ENCODE measurements at regions of chr6 and their contacts with region 1.

Region 1: DNA sequence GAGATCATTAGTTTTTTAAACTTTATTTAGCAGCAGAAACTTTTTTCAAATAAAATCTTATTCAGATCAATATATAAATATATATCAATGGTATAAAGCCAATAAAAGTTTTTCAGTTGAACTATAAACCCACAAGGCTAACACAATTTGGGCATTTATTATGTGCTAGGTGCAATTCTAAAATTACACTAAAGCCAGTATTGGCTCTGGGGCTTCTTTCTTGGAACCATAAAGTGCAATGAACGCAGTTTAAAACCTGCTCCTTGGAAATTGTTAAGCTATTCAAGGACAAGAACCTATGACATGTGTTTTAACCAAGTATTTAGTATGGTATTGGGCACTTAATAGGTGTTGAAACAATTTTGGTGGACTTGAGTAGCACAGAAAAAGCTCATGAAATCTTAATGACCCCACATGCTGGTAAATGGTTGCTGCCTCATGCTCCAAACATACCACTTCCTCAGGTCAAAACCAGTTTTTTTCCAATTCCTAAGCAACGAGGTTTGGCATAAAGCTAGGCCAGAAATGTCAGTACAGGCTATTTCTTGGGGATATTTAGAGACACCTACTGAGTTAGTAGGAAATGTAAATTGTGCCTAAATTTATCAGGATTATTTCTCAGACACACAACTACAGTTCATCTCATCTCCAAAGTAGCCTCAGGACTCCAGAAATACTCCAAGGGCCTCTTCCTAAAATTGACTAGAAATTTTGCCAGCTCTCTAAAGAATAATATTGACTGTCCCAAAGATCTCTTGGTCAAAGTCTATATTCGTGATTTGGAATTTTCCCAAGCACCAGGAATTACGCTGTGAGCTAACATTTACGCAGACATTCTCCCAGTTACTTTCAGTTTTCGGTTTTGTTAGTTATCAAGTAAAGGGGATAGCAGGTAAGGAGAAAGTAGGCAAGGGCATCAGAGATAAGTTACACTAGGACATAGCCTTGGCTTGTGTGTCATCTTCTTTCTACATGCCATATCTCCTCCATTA is 90.9 kb upstream of the LGSN start:
- DNase-seq: peak; percentile 84
- ATAC-seq: peak; percentile 96
- H3K4me3 ChIP-seq: peak overlapping the region; percentile 23 to 51 (median 25); a peak in 5 of 6 replicates
- H3K27ac ChIP-seq: peak overlapping the region; percentile 74
- H3K4me1 ChIP-seq: peaks cover 21% of the 10 kb centered on the region
- H3K27me3 ChIP-seq: no peaks in the 10 kb centered on the region
- CTCF ChIP-seq: no peak
- EP300 ChIP-seq: peak in 1 of 2 experiments; percentile 74; a peak in 2 of 4 replicates
- POLR2A ChIP-seq: no peak
- RAD21 ChIP-seq: no peak

Region 2: GRCh38 chr6:63319939-63320338 is 90.8 kb before region 1 on chr6 and contains the start of gene LGSN:
- CTCF ChIA-PET with region 1: no interaction called
- POLR2A ChIA-PET with region 1: no interaction called
- in situ Hi-C with region 1: no loop called
- intact Hi-C with region 1: no loop called
- DNase-seq: no peak
- ATAC-seq: no peak
- H3K4me3 ChIP-seq: no peak within 1 kb of the TSS
- H3K27ac ChIP-seq: no peak within 1 kb of the TSS
- H3K4me1 ChIP-seq: no peaks in the 10 kb centered on the region
- H3K27me3 ChIP-seq: no peaks in the 10 kb centered on the region
- CTCF ChIP-seq: no peak
- EP300 ChIP-seq: no peak
- POLR2A ChIP-seq: no peak
- RAD21 ChIP-seq: no peak
- total RNA-seq, gene LGSN: 0.13 and 0.53 TPM in 2 replicates

Region 3: GRCh38 chr6:63426844-63427243 is 16.1 kb after region 1 on chr6:
- CTCF ChIA-PET with region 1: no interaction called
- POLR2A ChIA-PET with region 1: no interaction called
- in situ Hi-C with region 1: no loop called
- intact Hi-C with region 1: no loop called
- DNase-seq: peak; percentile 31
- ATAC-seq: no peak
- H3K4me3 ChIP-seq: no peak overlapping the region
- H3K27ac ChIP-seq: no peak overlapping the region
- H3K4me1 ChIP-seq: peaks cover 48% of the 10 kb centered on the region
- H3K27me3 ChIP-seq: no peaks in the 10 kb centered on the region
- CTCF ChIP-seq: no peak
- EP300 ChIP-seq: no peak
- POLR2A ChIP-seq: no peak
- RAD21 ChIP-seq: no peak

Region 4: GRCh38 chr6:63452124-63452523 is 41.4 kb after region 1 on chr6:
- CTCF ChIA-PET with region 1: no interaction called
- POLR2A ChIA-PET with region 1: interaction called, 3 read pairs
- in situ Hi-C with region 1: no loop called
- intact Hi-C with region 1: loop called (anchors 5 kb)
- DNase-seq: peak; percentile 93
- ATAC-seq: peak; percentile 99
- H3K4me3 ChIP-seq: peak overlapping the region in 1 of 3 experiments; percentile 5; a peak in 1 of 6 replicates
- H3K27ac ChIP-seq: peak overlapping the region; percentile 79
- H3K4me1 ChIP-seq: peaks cover 90% of the 10 kb centered on the region
- H3K27me3 ChIP-seq: no peaks in the 10 kb centered on the region
- CTCF ChIP-seq: peak; percentile 17; the same call in 1 of the 2 replicates
- EP300 ChIP-seq: peak; percentile 82 to 94; a peak in 3 of 4 replicates
- POLR2A ChIP-seq: 0 out of 4 replicates have a peak, but pooled peaks of 1 of the 2 experiments have one; percentile 32
- RAD21 ChIP-seq: peak; percentile 47; the same call in 1 of the 2 replicates

Region 5: GRCh38 chr6:63503199-63503598 is 92.5 kb after region 1 on chr6:
- CTCF ChIA-PET with region 1: no interaction called
- POLR2A ChIA-PET with region 1: no interaction called
- in situ Hi-C with region 1: no loop called
- intact Hi-C with region 1: no loop called
- DNase-seq: no peak
- ATAC-seq: no peak
- H3K4me3 ChIP-seq: no peak overlapping the region
- H3K27ac ChIP-seq: no peak overlapping the region
- H3K4me1 ChIP-seq: peaks cover 61% of the 10 kb centered on the region
- H3K27me3 ChIP-seq: no peaks in the 10 kb centered on the region
- CTCF ChIP-seq: no peak
- EP300 ChIP-seq: no peak
- POLR2A ChIP-seq: no peak
- RAD21 ChIP-seq: no peak